PC-9 (cell line): ENCODE measurements at regions of chr6 and their contacts with region 1.

Region 1: GRCh38 chr6:21593412-21593926 is at the start of gene SOX4:
- DNase-seq: peak; percentile 90 to 91
- H3K4me3 ChIP-seq: peak within 1 kb of the TSS; percentile 98
- H3K27ac ChIP-seq: peak within 1 kb of the TSS; percentile 73
- H3K4me1 ChIP-seq: peaks cover 15% of the 10 kb centered on the region
- H3K27me3 ChIP-seq: no peaks in the 10 kb centered on the region
- CTCF ChIP-seq: no peak
- total RNA-seq, gene SOX4: 32.8 and 36.1 TPM in 2 replicates

Region 2: DNA sequence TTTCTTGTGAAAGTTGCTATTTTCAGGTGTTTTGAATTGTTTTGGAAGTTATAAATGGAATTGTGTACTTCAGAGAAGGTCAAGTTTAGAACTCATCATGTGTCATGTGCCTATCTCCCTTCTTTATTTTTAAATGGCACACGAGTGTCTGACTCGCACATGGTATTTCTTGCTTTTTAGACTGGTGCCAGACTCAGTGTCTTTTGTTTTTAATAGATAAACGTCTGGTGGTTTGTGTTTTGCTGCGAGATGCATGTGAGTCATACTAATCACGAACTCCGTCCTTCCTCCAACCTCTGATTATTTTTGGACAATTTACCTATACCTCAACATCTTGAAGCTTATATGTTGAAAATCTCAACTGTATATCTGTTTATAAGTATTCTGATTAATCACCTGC is 767.1 kb before region 1 on chr6:
- CTCF ChIA-PET with region 1: no interaction called
- POLR2A ChIA-PET with region 1: interaction called, 13 read pairs
- intact Hi-C with region 1: no loop called
- DNase-seq: no peak
- H3K4me3 ChIP-seq: no peak overlapping the region
- H3K27ac ChIP-seq: no peak overlapping the region
- H3K4me1 ChIP-seq: no peaks in the 10 kb centered on the region
- H3K27me3 ChIP-seq: no peaks in the 10 kb centered on the region
- CTCF ChIP-seq: no peak

Region 3: DNA sequence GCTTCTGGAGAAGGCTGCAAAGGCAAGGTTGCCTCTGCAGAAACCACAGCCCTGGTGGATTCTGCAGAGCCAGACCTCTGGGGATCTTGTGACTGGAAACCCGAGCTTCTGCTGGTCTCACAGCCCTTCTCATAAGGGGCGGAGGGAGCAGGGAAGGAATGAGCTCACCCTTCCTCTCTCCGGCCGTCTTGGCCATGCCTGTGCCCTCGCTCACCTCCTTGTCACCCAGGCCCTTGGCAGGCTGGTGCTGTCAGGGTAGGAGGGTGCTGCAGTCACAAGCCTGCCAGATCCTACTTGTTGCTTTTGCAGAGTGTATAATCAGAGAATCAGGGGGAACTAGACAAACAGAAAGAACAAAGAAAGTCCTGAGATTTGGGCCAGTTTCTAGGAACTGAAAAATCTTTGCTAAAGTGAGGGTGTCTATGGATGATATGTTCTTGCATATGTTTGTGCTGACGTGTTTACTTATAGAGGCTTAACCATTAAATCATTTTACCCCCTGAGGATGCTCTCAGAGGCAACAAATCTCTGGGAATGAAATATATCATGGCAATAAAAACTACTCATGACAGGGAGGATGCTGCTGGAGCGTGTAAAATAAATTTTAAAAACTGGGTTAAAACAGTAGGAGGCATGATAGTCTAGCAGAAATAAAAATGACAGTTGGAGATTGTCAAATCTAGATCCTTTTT is 244.8 kb before region 1 on chr6:
- CTCF ChIA-PET with region 1: no interaction called
- POLR2A ChIA-PET with region 1: no interaction called
- intact Hi-C with region 1: loop called (anchors 10 kb)
- DNase-seq: peak in 1 of 2 experiments; percentile 68
- H3K4me3 ChIP-seq: no peak overlapping the region
- H3K27ac ChIP-seq: no peak overlapping the region
- H3K4me1 ChIP-seq: no peaks in the 10 kb centered on the region
- H3K27me3 ChIP-seq: no peaks in the 10 kb centered on the region
- CTCF ChIP-seq: no peak

Region 4: DNA sequence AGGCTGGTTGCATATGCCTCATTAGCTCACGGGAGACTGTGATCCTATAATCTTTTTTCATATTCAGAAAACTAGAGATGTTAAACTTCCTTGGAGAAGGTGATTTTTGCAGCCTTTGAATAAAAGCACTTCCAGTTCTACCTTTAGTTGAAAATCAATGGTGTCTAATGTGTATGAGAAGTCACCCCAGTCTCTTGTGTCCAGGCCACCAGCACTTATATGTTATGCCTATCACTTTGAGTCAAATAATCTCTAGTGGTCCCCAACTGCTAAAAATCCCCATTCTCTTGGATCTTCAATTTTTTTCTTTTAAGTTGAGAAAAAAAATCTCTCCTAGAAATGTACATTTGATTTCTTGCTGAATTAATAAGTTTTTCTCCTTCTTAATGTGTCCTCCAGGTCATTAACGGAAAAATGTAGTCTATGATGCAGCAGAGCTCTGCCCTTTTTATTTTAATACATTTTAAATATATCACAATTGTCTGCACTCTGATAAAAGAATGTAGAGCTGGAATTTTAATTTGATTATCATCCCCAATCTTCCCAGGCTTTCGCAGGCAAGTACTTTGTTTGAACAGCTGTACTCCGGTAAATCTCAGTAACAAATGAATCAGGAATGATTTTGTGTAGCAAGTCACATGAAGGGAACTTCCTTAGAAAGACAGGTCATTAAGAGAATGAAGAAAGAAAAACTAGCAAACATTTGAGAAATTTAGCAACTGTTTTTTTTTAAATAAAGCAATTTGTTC is 147.1 kb after region 1 on chr6:
- CTCF ChIA-PET with region 1: interaction called, 5 read pairs
- POLR2A ChIA-PET with region 1: interaction called, 16 read pairs
- intact Hi-C with region 1: no loop called
- DNase-seq: no peak
- H3K4me3 ChIP-seq: no peak overlapping the region
- H3K27ac ChIP-seq: no peak overlapping the region
- H3K4me1 ChIP-seq: peaks cover 59% of the 10 kb centered on the region
- H3K27me3 ChIP-seq: no peaks in the 10 kb centered on the region
- CTCF ChIP-seq: no peak

Region 5: DNA sequence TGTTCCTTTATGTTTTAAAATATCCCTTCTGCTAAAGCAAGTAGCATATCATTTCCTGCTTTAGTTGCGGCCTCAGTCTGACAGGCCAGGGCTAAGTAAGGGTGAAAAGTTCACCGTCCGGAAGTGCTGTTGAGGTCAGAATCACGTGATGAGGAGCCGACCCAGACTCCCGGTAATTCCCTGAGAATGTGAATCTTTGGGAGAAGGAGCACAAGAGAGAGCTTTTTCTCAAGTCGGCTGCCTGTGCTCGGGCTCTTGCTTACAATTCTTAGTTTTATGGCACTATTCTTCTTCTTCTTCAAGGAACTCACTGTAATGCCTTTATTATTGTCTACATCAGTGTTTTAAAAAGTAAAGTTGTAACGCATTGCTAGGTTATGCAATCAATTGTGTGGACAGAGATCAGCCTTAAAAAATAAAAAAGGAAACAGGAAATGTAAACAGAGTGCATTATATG is 394.1 kb after region 1 on chr6:
- CTCF ChIA-PET with region 1: no interaction called
- POLR2A ChIA-PET with region 1: interaction called, 14 read pairs
- intact Hi-C with region 1: no loop called
- DNase-seq: peak; percentile 53 to 54
- H3K4me3 ChIP-seq: 0 out of 2 replicates have a peak overlapping the region, but pooled peaks have one; percentile 3
- H3K27ac ChIP-seq: no peak overlapping the region
- H3K4me1 ChIP-seq: peaks cover 14% of the 10 kb centered on the region
- H3K27me3 ChIP-seq: no peaks in the 10 kb centered on the region
- CTCF ChIP-seq: no peak

Region 6: GRCh38 chr6:22320750-22321149 is 727.3 kb after region 1 on chr6:
- CTCF ChIA-PET with region 1: no interaction called
- POLR2A ChIA-PET with region 1: interaction called, 10 read pairs
- intact Hi-C with region 1: no loop called
- DNase-seq: peak; percentile 34 to 64
- H3K4me3 ChIP-seq: no peak overlapping the region
- H3K27ac ChIP-seq: no peak overlapping the region
- H3K4me1 ChIP-seq: peaks cover 16% of the 10 kb centered on the region
- H3K27me3 ChIP-seq: no peaks in the 10 kb centered on the region
- CTCF ChIP-seq: no peak

Region 7: GRCh38 chr6:22466665-22467245 is 873.3 kb after region 1 on chr6:
- CTCF ChIA-PET with region 1: no interaction called
- POLR2A ChIA-PET with region 1: no interaction called
- intact Hi-C with region 1: no loop called
- DNase-seq: no peak
- H3K4me3 ChIP-seq: no peak overlapping the region
- H3K27ac ChIP-seq: no peak overlapping the region
- H3K4me1 ChIP-seq: 0 out of 2 replicates have a peak, but pooled peaks cover 4% of the 10 kb centered on the region
- H3K27me3 ChIP-seq: no peaks in the 10 kb centered on the region
- CTCF ChIP-seq: no peak

Region 8: GRCh38 chr6:23446394-23447046 is 1853.1 kb after region 1 on chr6:
- CTCF ChIA-PET with region 1: no interaction called
- POLR2A ChIA-PET with region 1: no interaction called
- intact Hi-C with region 1: loop called (anchors 5 kb)
- DNase-seq: peak in 1 of 2 experiments; percentile 3
- H3K4me3 ChIP-seq: no peak overlapping the region
- H3K27ac ChIP-seq: no peak overlapping the region
- H3K4me1 ChIP-seq: no peaks in the 10 kb centered on the region
- H3K27me3 ChIP-seq: no peaks in the 10 kb centered on the region
- CTCF ChIP-seq: peak; percentile 57; the same call in 1 of the 2 replicates